Mammary epithelial cell (primary cell): ENCODE measurements at regions of chr3 and their contacts with region 1.

Region 1: DNA sequence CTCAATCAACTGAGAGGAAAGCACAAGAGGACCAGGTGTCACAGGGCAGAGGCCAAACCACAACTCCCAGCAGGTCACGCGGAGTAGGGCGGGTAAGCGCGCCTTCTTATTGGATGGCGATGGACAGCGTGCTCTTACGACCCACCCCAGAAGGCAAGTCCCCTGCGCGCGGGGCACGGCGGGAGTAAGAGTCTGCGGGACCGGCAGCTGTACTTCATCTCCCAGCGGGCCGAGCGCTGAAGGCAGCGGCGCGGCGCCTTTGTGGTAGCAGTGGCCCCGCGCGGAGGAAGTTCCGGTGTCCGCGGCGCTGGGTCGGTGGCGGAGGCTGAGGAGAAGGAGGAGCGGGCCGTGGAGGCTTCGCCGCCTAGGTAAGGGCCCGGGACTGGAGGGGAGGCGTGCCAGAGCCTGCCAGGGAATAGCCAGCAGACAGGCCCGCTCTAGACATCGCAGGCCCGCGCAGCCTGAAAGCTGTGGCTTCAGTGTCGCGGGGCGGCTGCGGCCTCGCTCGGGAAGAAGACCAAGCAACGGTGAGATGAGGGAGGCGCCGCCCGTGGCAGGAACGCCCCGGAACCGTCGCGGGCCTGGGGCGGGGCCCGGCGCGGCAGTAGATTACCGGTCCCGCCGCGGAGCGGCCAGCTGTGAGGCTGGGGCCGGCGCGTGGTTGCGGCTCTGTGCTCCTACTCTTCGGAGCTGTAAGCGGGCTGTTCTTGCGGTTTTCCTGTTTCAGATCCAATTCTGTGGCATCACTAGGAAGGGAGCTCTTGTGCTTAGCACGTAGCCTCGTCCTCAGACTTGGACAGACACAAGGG is at the start of gene RBM6:
- DNase-seq: peak; percentile 97
- H3K4me3 ChIP-seq: peak within 1 kb of the TSS; percentile 95 to 100 (median 99)
- H3K27ac ChIP-seq: peak within 1 kb of the TSS; percentile 81
- H3K4me1 ChIP-seq: peaks cover 8% of the 10 kb centered on the region
- H3K27me3 ChIP-seq: no peaks in the 10 kb centered on the region
- CTCF ChIP-seq: no peak
- total RNA-seq, gene RBM6: 39.8 to 60.9 TPM

Region 2: GRCh38 chr3:49929331-49930240 is 10.5 kb before region 1 on chr3 and contains the start of gene MON1A:
- CTCF ChIA-PET with region 1: interaction called, 3 read pairs
- dilution Hi-C with region 1: no loop called
- in situ Hi-C with region 1: no loop called
- intact Hi-C with region 1: loop called (anchors 1 kb)
- DNase-seq: peak; percentile 89
- H3K4me3 ChIP-seq: peak within 1 kb of the TSS; percentile 65 to 72 (median 66)
- H3K27ac ChIP-seq: no peak within 1 kb of the TSS
- H3K4me1 ChIP-seq: peaks cover 25% of the 10 kb centered on the region
- H3K27me3 ChIP-seq: no peaks in the 10 kb centered on the region
- CTCF ChIP-seq: peak in 1 of 2 donors; percentile 47
- total RNA-seq, gene MON1A: 11.5 to 15.9 TPM